Cardiac septum (tissue), 1 donor: ENCODE measurements at regions of chr1 and their contacts with region 1.

Region 1: GRCh38 chr1:231866392-231867331 is 240.1 kb downstream of the DISC1 start:
- DNase-seq: no peak

Region 2: DNA sequence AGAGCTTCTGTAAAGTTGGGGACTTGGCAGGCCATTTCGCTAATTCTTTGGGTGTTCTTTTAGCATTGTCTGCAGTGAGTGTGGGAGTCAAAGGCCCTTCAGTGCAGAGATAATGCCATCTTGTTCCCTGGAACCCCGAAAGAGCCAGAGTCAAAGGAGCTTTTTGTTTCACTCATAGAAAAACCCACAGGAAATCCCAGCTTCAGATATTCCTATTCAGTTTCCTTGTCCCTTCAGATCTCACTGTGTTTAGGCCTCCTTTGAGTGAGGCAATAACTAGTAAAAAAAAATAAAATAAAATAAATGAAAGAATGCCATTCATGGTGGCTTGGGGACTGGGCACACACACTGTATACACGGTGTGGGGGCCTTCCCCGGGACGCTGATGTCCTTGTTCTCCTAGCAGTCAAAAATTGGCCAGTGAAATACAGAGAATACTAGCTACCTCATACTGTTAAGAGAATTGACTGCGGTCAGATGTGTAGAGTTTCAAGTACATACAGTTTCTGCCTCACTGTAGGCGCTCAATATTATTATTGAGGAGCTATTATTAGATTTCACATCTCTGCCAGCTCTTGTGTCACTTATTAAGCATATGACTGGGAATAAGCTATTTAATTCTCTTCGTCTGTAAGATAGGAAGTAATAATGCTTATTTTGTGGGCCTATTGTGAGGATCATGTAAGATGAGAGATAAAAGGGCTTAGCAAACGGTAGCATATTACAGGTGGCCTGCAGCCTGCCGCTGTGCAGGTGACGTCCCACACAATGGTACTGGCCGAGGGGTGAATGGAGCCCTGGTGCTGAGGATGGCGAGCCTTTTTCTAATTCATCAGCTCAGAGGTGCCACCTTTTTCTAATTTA is 223.4 kb before region 1 on chr1:
- intact Hi-C with region 1: no loop called
- DNase-seq: no peak

Region 3: GRCh38 chr1:231931846-231932454 is 65.3 kb after region 1 on chr1:
- intact Hi-C with region 1: loop called (anchors 5 kb)
- DNase-seq: no peak

Region 4: DNA sequence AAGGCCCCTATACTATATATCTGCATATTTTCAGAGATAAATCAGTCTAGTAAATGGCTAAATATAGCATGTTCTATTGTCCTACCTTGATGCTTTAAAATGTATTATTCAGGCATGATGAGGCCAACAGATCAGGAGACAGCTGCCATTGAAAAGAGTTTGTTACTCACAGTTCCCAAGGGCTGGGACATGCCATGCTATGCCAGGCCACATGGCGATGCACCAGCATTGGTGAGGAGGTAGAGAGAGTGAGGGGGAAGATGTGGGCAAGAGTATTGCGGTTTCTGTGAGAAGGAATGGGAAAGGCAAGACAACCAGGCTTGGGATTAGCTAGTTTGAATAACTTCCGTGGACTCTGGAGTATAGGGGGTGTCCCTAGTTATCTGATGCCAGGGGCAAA is 76.4 kb after region 1 on chr1:
- intact Hi-C with region 1: no loop called
- DNase-seq: no peak

Region 5: DNA sequence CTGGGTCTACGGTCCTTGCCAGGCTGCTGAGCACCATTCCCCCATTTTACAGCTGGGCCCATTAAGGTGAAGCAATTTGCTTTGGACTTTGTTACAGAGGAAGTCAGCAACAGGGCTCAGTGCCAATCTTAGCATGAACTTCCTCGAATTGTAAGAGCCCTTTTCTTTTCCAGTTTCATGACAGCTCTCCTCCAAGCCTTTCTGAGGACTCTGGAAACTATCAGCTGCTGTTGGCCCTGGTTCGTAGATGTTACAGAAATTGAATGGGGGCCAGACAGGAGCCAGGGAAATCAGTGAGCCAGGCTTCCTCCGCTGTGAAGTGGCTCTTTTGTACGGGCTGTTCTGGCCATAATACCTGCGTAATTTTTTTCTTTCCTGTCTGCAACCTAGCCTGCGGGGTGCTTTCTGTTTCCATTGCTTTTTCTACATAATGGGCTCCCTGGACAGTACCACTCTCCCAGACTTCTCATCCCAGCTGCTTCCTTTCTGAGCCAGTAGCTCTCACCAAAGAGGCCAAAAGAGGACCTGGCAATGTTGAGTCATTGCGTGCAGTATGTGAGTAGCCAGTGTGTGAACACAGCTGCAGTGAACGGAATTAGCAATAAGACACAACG is 146.2 kb after region 1 on chr1:
- intact Hi-C with region 1: loop called (anchors 5 kb)
- DNase-seq: no peak

Region 6: GRCh38 chr1:232260844-232261243 is 394.2 kb after region 1 on chr1:
- intact Hi-C with region 1: no loop called
- DNase-seq: no peak

Region 7: DNA sequence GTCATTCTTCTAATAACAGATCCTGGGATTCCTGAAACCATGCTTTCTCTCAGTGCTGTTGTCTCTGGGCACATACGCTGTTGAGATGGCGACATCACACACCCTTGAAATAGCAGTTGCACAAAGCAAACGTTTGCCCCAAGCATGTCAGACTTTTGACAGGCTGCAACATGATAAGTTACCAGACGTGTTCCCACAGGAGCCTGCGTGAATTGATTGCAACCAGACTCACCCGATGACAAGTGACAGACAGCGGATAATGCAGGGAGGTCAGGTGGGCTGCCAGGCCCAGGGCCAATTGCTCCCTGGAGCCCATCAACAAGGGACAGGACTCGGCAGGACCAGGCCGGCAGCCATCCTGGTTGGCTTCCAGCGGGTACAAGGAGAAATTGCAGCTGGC is 452.4 kb after region 1 on chr1:
- intact Hi-C with region 1: loop called (anchors 5 kb)
- DNase-seq: peak; percentile 91

Region 8: DNA sequence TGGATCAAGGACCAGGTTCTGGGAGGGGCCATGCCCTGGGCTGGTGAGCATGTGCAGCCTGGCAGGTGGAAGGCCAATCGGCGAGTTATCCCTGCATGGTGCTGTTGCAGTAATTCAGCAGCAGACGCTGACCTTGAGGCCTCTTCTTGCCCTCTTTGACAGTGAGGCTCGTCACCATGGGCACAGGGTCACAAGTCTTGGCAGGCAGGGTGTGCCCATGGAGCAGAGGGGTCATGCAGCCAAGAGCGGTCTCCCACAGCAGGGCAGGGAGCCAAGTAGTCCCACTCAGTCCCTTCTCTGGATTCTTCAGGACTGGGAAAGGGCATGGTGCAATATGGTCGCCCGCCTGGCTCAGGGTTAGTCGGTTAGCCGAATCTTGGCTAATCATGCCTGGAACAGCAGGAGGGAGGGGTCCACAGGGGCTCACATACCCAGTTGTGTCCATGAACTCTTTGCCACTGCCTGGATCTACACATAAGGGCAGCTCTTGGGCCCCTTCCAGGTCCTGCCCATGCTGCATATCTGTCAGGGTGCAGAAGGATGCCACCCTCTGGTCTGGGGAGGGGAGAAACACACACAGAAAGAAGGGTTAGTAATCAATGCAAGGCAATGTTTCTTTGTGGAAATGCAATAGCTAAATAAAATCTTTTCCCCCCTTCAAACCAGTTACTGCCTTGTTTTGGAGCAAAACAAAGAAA is 536.5 kb after region 1 on chr1:
- intact Hi-C with region 1: loop called (anchors 5 kb)
- DNase-seq: no peak

Region 9: DNA sequence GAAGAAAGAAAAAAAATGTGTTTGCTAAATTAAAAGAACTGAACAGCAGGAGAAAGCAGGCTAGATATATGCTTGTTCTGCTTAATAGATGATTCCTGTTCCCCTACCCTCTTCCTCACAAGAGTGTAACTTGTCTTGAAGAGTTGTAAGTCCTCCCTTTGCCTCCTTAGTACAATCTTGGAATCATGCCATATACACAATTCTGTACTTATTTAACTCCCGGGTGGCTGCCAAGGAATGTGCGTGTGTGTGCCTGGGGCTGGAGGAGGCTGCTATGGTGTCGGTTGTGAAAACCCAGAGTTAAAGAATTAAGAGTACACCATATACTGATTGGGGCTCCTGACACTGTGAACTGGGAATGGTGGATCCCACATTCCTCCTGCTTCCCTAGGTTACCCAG is 569.1 kb after region 1 on chr1:
- intact Hi-C with region 1: loop called (anchors 10 kb)
- DNase-seq: no peak